GM18951 (cell line): ENCODE measurements at regions of chr4 and their contacts with region 1.

Region 1: GRCh38 chr4:158624889-158625478 is 46.7 kb downstream of the C4orf46 start:
- POLR2A ChIP-seq: no peak

Region 2: DNA sequence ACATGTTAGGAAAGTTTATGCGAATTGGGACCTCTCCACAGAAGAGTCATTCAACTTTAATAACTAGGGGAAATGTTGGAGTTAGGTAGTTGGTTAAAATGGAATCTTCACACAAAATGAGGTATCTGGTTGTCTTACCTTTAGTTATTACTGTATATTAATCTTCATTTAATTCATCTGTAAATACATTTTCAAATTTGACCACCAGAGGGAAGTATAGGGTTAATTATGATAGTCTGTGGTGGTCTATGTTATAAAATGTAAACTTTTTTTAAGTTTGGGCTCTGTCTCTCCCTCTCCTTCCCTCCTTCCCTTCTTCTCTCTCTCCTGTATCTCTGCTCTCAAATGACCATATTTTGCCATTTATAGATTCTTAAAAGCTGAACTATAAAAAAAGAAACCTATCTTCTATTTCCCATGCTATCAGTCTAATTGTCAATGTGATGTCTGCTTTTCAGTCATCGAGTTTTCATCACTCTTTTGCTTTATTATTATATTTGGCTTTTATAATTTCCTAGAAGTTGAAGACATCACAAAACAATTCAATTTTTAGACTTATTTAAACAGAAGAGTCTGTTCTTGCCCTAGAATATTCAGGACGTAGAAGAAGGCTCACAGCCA is 364.9 kb before region 1 on chr4:
- in situ Hi-C with region 1: loop called (anchors 10 kb)
- POLR2A ChIP-seq: no peak

Region 3: DNA sequence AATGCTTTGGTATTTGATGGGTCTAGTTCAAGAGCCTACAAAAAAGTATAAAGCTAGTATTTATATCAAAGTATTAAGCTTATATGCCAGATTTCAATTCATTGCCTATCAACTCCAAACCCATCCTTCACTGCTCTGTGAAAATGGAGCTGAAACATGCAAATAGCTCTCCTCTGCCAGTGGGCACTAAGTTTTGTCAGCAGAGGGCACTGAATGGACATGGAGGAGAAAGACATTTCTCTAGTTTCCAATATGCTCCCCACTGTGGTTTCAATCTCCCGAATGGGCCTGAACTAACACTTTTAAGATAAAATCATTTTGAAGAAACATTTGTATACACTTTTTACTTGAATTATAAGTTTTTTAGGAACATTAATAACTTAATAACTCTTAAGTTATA is 85.8 kb after region 1 on chr4:
- in situ Hi-C with region 1: no loop called
- POLR2A ChIP-seq: no peak

Region 4: GRCh38 chr4:159117968-159118367 is 493.0 kb after region 1 on chr4:
- in situ Hi-C with region 1: no loop called
- POLR2A ChIP-seq: no peak

Region 5: GRCh38 chr4:159823743-159824142 is 1198.8 kb after region 1 on chr4:
- in situ Hi-C with region 1: no loop called
- POLR2A ChIP-seq: no peak